Right ventricle myocardium inferior (tissue), 1 donor: ENCODE measurements at regions of chr1 and their contacts with region 1.

Region 1: DNA sequence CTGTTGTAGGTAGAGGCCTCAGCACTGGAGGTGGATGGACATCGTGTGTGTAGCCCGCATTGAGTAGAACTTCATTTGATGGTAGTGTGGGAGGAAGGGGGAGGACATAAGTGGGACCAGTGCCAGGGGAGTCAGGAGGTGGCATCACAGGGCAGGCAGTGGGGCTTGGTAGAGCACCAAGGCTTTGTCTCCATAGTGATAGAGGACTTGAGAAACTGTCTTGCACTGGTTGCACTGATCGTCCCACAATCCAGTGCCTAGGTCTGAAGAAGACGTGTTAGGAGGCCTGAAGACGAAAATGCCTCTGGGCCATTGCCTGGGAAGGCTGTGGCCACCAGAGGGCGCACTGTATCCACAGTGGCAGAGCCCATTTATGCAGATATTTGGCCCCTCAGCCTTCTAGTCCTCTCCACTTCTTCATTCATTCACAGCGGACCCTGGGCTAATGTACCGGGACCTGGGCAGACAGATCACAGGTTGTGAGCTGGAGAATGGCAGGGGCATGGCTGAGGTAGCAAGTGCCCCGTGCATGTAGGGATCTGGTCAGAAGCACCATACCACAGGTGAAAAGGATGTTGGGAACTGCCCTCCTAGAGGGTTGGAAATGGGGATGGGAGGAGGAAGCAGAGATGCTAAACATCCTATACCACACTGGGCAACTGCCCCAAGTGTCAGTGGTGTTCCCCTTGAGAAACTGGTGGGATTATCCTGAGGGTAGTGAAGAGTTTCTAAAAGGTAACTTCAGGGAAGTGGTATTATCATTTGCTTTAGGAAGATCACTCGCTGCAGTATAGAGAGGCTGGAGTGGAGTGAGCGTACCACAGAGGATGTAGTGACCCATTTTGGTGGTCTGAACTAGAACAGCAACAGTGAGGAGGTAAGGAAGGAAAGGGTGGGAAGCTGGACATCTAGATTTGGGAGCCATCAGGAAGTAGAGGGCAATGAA is 95.3 kb downstream of the PIK3R3 start:
- DNase-seq: peak; percentile 87
- ATAC-seq: peak; percentile 68

Region 2: GRCh38 chr1:45594412-45594811 is 442.8 kb before region 1 on chr1:
- intact Hi-C with region 1: no loop called
- DNase-seq: no peak
- ATAC-seq: no peak

Region 3: GRCh38 chr1:45979074-45979777 is 57.9 kb before region 1 on chr1:
- intact Hi-C with region 1: no loop called
- DNase-seq: no peak
- ATAC-seq: no peak

Region 4: GRCh38 chr1:46132529-46133180 is 95.5 kb after region 1 on chr1 and contains the start of gene PIK3R3:
- intact Hi-C with region 1: loop called (anchors 5 kb)
- DNase-seq: peak; percentile 98
- ATAC-seq: peak; percentile 98
- total RNA-seq, gene PIK3R3: 22.6 TPM

Region 5: DNA sequence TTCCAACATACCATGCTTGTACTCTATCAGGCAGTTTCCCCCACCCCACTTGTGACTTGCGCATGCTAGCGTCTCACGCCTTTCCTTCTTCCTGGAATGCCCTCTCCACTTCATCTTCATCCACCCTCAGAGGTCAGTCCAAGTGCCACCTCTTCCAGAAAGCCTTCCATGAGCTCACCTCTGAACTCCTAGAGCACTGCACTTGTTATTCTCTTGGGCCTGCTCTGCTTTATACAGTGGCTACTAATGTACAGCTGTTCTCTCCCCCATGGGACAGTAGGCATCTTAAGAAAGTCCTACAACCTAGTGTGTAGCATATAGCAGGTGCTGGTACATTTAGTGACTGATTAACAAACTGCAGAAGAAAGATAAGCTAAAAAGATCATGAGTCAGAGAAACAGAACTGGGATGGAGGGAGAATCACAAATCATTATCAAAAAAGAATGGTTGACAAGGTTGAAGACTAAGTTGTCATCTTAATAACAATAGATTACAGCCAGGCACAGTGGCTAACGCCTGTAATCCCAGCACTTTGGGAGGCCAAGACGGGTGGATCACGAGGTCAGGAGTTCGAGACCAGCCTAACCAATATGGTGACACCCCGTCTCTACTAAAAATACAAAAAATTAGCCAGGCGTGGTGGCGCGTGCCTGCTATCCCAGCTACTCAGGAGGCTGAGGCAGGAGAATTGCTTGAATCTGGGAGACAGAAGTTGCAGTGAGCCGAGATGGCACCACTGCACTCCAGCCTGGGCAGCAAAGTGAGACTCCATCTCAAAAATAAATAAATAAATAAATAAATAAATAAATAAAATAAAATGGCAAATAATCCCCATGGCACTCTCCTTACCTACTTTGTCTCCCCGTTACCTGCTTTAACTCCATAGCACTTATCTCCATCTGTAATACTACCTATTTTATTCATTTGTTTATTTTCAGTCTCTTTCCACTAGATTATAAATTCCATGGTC is 121.4 kb after region 1 on chr1:
- intact Hi-C with region 1: no loop called
- DNase-seq: no peak
- ATAC-seq: no peak

Region 6: DNA sequence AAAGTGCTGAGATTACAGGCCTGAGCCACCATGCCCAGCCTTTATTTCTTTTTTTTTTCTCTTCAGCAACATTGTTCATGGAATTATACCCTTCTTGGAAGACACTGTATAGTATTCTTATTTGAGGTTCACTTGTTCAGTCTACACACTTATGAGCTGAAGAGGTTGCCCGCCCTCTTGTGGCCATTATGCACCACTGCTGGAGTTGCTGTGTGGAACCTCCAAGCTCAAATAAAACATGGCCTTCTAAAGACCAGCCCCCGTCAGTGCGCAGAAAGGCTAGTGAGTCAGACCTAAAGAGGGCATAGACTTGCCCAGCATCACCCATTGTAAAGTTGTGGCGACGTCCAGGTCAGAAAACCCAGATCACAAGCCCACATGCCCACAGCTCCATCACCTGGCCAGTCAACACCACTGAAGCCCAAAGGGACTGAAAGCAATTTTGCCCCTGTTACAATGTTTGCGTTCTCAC is 186.3 kb after region 1 on chr1:
- intact Hi-C with region 1: loop called (anchors 5 kb)
- DNase-seq: peak; percentile 81
- ATAC-seq: peak; percentile 87